T-cell (primary cell): ENCODE measurements at regions of chr22 and their contacts with region 1.

Region 1: DNA sequence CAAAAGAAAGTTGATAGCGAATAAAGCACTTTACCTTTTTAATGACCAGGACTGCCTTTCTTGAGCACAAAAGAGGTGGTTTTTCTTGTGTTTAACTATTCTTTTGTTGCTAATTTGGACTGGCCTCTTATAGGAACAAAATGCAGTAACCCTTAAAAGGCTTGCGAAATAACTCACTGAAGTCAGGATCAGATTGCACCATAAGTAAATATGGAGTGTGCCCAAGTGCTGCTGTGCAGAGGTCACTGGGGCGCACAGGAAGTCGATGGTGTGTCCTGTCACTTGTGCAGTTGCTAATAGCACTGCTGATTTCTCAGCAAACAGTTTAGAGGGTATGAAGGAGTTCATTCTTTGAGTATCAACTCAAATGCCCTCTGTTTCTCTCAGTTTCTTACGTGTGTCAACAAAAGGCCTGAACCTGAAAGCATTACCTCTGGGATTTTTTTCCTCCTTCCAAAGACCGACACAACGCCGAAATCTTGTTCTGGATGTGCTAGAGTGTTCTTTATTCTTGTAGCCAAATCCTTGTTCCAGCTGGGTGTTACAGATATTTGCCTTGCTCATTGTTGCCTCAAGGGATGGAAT is 71.3 kb downstream of the ATXN10 start:
- DNase-seq: no peak
- ATAC-seq: no peak
- H3K4me3 ChIP-seq: no peak overlapping the region
- H3K4me3 Mint-ChIP-seq: no peak overlapping the region
- H3K27ac ChIP-seq: no peak overlapping the region
- H3K27ac Mint-ChIP-seq: no peak overlapping the region
- H3K4me1 ChIP-seq: no peaks in the 10 kb centered on the region
- H3K4me1 Mint-ChIP-seq: peaks cover 2 to 6% (median 3%) of the 10 kb centered on the region in 3 donors
- H3K27me3 ChIP-seq: no peaks in the 10 kb centered on the region
- H3K27me3 Mint-ChIP-seq: no peaks in the 10 kb centered on the region

Region 2: GRCh38 chr22:45757068-45757467 is 14.1 kb after region 1 on chr22:
- CTCF ChIA-PET with region 1: no interaction called
- POLR2A ChIA-PET with region 1: interaction called in 1 of 2 experiments, 11 read pairs
- DNase-seq: no peak
- ATAC-seq: no peak
- H3K4me3 ChIP-seq: no peak overlapping the region
- H3K4me3 Mint-ChIP-seq: no peak overlapping the region
- H3K27ac ChIP-seq: no peak overlapping the region
- H3K27ac Mint-ChIP-seq: no peak overlapping the region
- H3K4me1 ChIP-seq: peaks cover 0 to 3% of the 10 kb centered on the region in 2 experiments
- H3K4me1 Mint-ChIP-seq: peaks cover 2 to 5% (median 3%) of the 10 kb centered on the region in 3 donors
- H3K27me3 ChIP-seq: no peaks in the 10 kb centered on the region
- H3K27me3 Mint-ChIP-seq: no peaks in the 10 kb centered on the region

Region 3: DNA sequence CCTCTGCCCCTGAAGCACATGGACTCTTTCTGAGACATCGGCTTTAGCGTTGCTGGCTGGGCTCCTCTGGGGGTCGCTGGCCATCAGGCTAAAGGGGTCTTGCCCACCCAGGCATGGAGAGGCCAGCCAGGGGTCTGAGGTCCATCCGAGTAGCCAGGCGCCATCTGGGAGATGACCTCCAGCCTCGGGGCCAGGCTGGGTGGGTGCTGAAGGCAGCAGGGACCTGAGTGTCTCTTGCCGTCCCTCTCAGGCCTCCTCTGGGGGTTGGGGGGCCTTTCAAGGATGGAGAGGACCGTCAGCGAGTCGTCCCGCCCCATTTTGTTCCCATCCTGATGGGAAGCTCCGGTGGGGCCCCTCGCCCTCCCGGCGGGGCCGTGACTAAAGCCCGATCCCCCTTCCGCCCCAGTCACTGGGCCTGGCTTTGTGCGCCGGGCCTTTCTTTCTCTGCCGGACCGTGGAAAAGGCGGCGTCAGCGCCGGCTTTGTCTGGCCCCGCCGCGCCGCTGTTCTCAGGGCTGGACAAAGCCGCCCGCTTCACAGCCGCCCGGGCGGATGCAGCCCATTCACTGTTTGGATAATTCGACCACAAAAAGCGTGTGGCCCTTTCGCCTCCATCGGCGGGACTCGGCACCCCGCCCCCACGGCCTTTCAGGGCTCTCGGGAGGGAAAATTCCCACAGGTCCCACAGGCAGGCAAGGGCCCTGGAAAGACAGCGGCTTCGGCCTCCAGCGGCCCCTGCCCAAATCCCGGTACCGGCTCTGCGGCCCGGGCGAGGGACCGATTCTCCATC is 146.5 kb after region 1 on chr22:
- CTCF ChIA-PET with region 1: no interaction called
- POLR2A ChIA-PET with region 1: no interaction called
- DNase-seq: no peak
- ATAC-seq: no peak
- H3K4me3 ChIP-seq: no peak overlapping the region
- H3K4me3 Mint-ChIP-seq: no peak overlapping the region
- H3K27ac ChIP-seq: no peak overlapping the region
- H3K27ac Mint-ChIP-seq: no peak overlapping the region
- H3K4me1 ChIP-seq: no peaks in the 10 kb centered on the region
- H3K4me1 Mint-ChIP-seq: no peaks in the 10 kb centered on the region
- H3K27me3 ChIP-seq: peaks cover 0 to 74% of the 10 kb centered on the region in 2 experiments
- H3K27me3 Mint-ChIP-seq: peaks cover 13 to 29% of the 10 kb centered on the region in 2 donors